Posterior vena cava (tissue), 2 donors: ENCODE measurements at regions of chr19 and their contacts with region 1.

Region 1: GRCh38 chr19:2900296-2901252 is at the start of gene ZNF57:
- DNase-seq: peak; percentile 100
- total RNA-seq, gene ZNF57: 2.4 to 3.0 TPM

Region 2: GRCh38 chr19:2869618-2870017 is 31.0 kb before region 1 on chr19:
- intact Hi-C with region 1: no loop called
- DNase-seq: no peak

Region 3: DNA sequence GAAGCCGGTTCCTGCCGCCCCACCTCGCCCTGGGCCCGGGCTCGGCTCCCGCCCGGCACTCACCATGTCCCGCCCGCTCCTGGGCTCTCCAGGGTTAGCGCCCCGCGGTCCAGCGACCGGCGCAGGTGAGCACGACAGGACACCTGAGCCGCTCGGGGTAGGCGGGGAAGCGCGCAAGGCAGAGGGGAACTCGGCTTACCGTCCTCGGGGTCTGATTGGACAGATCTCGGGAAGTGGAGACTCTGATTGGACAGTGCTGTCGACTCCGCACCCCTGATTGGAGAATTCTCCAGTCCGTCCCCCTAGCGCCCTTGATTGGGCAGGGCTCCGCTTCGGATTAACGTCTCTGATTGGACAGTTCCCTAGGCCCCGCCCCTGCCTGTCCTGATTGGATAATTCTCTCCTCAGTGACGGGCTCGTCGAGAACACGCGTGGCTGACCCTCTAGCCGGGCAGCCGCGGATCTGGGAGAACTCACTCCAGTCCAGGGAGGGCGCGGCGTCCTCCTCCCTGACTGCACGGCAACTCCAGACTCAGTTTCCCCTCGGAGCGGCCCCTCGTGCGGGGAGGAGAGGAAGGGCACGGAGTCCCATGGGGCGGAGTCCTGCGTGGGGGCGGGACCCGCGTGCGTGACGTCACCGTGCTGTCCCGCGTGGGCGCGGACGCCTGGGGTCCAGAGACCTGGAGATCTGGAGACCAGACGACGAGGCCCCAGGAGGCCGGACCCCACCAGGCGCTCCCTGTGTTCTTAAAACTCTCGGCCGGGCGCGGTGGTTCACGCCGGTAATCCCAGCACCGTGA is 44.4 kb after region 1 on chr19 and contains the start of gene ZNF77:
- intact Hi-C with region 1: loop called in 1 of 2 experiments (anchors 5 kb)
- DNase-seq: peak; percentile 99
- total RNA-seq, gene ZNF77: 2.4 to 4.0 TPM